Activated CD8-positive, alpha-beta T cell treated with anti-CD3 and anti-CD28 coated beads for 36 hours (primary cell): ENCODE measurements at regions of chr19 and their contacts with region 1.

Region 1: DNA sequence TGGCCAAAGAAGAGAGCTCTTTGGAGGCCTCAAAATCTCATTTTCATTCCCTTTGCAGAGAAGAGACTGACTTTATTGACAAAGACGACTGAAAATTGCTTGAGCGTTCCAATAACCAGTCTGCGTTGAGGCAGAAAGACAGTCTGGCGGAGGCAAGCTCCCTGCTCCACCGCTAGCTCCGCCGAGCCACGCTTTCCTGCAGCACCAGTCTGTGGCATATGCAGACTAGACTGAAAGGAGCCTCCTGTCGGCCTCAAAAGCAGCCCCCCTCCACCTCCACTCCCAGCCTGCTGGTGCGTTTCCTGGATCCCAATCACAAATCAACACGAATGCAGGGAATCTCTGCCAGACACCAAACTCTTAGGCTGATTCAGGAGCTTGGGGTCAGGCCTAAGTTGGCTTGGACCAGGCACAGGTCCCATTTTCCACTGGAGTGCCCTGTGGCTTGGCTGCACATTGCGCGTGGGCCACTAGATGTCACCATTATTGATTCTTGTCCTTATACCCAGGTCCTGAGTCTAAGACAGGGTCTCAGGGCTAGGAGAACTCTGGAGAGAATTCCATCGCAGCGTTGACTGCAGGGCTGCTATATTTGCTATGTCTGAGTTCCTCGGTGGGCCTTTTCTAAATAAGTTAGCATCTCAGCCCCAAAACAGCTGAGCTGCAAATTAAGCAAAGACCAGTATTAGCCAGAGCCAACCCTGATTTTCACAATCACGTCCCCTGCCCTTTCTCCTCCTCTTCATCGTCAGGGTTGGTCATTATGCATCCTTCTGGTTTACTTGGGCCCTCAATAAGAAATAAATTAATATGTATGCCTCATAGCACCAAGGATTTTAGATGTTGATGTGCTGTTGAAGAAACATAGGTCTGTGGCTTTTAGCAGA is 5.2 kb upstream of the ZNF507 start:
- DNase-seq: peak; percentile 72
- ATAC-seq: peak; percentile 77
- H3K4me3 Mint-ChIP-seq: no peak overlapping the region
- H3K27ac Mint-ChIP-seq: no peak overlapping the region
- H3K4me1 Mint-ChIP-seq: peaks cover 3% of the 10 kb centered on the region
- H3K27me3 Mint-ChIP-seq: peaks cover 3% of the 10 kb centered on the region
- CTCF ChIP-seq: peak; percentile 66

Region 2: GRCh38 chr19:32318880-32319520 is 21.2 kb before region 1 on chr19:
- CTCF ChIA-PET with region 1: interaction called, 11 read pairs
- POLR2A ChIA-PET with region 1: no interaction called
- intact Hi-C with region 1: no loop called
- DNase-seq: peak; percentile 17
- ATAC-seq: peak; percentile 34
- H3K4me3 Mint-ChIP-seq: no peak overlapping the region
- H3K27ac Mint-ChIP-seq: no peak overlapping the region
- H3K4me1 Mint-ChIP-seq: no peaks in the 10 kb centered on the region
- H3K27me3 Mint-ChIP-seq: peaks cover 10% of the 10 kb centered on the region
- CTCF ChIP-seq: no peak